ENCODE measurements at regions of chr12 and their contacts with region 1.

Region 1: GRCh38 chr12:546921-547845 is 87.4 kb downstream of the B4GALNT3 start:
- DNase-seq: peak; percentile 40 to 64
- H3K4me3 ChIP-seq: no peak overlapping the region
- H3K27ac ChIP-seq: no peak overlapping the region
- H3K4me1 ChIP-seq: no peaks in the 10 kb centered on the region
- H3K27me3 ChIP-seq: no peaks in the 10 kb centered on the region
- CTCF ChIP-seq: peak; percentile 100

Region 2: DNA sequence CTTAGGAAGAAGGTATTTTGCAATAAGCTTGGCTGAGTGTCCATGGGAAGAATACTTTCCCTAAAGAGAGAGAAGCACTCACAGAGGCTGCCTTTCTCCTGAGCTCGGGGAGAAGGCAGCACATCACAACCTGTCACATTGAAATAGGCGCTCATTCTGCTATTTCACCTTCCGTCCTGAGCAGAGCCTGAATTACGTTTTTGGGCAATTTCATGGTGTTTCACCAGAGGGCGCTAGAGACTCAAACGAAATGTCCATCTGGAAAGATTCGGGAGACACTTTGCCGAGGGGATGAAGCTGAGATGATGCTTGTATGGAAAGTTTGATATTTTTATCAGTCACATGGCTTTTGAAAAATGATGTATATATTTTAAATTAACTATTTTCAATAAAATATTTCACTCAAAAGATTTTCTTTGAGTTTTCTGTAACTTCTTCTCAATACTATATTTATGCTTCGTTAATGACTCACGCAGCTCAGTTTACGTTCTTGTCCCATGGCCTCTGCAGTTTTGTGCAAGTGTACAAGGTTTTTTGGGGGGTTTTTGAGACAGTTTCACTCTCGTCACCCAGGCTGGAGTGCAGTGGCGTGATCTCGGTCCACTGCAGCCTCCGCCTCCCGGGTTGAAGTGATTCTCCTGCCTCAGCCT is 104.8 kb before region 1 on chr12:
- CTCF ChIA-PET with region 1: interaction called, 5 read pairs
- POLR2A ChIA-PET with region 1: no interaction called
- intact Hi-C with region 1: loop called (anchors 2 kb)
- DNase-seq: peak in 1 of 2 experiments; percentile 60
- H3K4me3 ChIP-seq: no peak overlapping the region
- H3K27ac ChIP-seq: no peak overlapping the region
- H3K4me1 ChIP-seq: no peaks in the 10 kb centered on the region
- H3K27me3 ChIP-seq: no peaks in the 10 kb centered on the region
- CTCF ChIP-seq: peak; percentile 95